Posterior vena cava (tissue), 2 donors: ENCODE measurements at regions of chr7 and their contacts with region 1.

Region 1: DNA sequence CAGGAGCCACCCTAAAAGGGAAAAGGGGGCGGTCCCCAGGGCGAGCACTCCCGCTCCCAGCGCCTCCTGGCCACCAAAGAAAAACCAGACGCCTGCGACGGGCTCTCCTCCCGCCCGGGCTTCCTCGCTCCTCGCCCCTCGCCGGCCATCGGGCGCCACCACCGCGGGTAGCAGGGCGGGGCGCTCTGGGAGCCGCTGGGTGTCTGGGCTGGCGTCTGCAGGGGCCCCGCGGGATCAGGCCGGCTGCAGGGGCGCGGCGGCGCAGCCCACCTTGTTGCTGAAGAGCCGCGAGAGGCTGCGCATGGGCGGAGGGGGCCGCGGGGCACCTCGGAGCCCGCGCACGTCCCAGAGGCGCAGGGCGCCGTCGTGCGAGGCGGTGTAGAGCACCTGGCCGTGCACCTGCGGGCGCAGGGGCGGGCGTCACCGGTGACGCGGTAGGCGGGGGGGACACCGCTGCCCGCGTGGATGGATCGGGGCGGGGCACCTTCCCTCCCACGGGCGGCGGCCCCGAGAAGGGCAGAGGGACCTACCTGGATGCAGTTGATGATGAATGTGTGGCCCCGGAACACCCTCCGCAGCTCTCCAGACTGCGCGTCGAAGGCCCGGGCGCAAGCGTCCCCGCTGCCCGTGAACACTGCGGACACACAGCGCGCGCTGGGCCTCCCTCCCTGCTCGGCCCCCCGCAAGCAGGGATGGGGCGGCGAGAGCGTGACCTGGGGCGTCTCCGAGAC is 28.3 kb downstream of the WDR86 start:
- DNase-seq: peak; percentile 66

Region 2: DNA sequence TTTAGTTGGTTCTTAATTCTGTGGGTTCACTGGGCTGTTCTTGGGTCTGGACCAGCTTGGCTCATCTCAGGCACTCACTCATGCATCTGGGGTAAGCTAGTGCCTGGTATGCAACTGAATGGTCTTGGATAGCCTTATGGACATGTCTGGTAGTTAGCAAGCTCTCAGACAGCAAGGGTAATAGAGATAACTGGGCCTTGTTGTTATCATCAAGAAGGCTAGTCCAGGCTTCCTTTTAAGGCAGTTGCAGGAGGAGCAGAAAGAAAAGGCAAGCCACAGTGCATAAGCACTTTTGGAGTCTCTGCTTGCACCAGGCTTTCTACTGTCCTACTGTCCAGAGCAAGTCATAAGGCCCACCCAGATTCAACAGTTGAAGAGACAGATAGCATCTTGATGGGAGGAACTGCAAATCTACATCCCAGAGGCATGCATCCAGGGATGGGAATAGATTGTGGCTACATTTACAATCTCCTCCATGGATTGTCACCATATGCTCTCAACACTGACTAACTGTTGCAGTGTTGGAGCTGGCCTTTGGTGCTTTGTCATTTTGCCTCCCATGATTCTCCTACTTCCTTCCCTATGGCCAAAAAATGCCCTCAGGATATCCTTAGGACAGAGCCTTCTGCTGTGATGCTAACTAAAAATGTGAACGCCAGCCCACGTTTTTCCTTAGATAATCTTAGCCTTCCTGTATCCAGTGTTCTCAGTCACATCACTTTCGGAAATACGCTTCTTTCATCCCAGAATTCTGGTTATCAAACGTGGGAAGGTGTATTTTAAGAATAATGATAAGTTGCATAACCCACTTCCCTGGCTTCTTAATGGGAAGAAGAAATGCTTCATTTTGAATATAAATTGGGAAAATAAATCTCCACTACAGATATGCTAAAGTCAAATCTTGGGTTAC is 810.7 kb before region 1 on chr7:
- intact Hi-C with region 1: loop called in 1 of 2 experiments (anchors 10 kb)
- DNase-seq: no peak

Region 3: GRCh38 chr7:151080067-151080521 is 301.4 kb before region 1 on chr7:
- intact Hi-C with region 1: no loop called
- DNase-seq: no peak

Region 4: DNA sequence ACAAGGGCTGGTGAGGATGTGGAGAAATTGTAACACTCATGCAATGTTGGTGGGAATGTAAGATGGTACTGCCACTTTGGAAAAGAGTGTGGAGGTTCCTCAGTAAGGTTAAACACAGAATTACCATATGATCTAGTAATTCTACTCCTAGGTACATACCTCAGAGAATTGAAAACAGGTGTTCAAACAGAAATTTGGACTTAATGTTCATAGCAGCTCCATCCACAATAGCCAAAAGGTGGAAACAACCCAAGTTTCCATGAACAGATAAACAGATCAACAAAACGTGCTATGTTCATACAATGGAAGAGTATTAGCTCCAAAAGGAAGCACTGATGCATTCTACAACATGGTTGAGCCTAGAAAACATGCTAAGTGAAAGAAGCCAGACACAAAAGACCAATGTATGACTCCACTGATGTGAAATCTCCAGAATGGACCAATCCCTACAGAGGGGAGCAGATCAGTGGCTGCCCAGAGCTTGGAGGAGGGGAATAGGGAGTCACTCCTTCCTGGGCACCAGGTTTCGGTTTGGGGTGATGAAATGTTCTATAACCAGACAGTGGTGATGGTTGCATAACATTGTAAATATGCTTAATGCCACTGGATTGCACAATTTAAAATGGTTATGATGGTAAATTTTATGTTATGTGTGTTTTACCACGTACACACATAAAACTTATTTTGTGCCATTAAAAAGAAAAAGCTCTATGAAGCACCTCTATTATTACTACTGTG is 34.0 kb after region 1 on chr7:
- intact Hi-C with region 1: no loop called
- DNase-seq: no peak